Naive thymus-derived CD4-positive, alpha-beta T cell (primary cell): ENCODE measurements at regions of chr2 and their contacts with region 1.

Region 1: DNA sequence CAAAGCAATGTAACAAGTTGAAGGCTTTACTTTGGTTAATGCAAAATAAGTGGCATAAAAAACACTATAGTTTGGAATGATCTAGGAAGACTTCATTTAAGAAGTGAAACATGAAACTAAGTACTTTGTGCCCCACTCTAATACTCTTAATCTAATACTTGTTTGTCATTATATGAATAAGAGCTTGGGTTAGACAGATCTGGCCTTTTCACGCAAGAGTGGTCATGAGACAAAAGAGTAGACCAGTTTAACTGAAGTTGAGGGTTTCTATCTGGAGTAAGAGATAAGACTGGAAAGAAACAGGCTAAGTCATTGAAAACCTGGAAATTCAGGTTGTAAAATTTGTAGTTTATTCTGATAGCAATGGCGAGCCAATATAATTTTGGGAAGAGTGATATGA is 2.8 kb downstream of the SLC30A6 start:
- DNase-seq: no peak
- ATAC-seq: no peak
- H3K4me3 ChIP-seq: no peak overlapping the region
- H3K4me3 Mint-ChIP-seq: no peak overlapping the region
- H3K27ac ChIP-seq: no peak overlapping the region
- H3K27ac Mint-ChIP-seq: peak overlapping the region in 4 of 9 donors; percentile 2 to 25 (median 10)
- H3K4me1 ChIP-seq: no peaks in the 10 kb centered on the region
- H3K4me1 Mint-ChIP-seq: peaks cover 17 to 61% (median 49%) of the 10 kb centered on the region in 7 donors
- H3K27me3 ChIP-seq: no peaks in the 10 kb centered on the region
- H3K27me3 Mint-ChIP-seq: no peaks in the 10 kb centered on the region

Region 2: GRCh38 chr2:32039447-32040219 is 128.9 kb before region 1 on chr2 and contains the start of gene DPY30:
- CTCF ChIA-PET with region 1: interaction called, 7 read pairs
- POLR2A ChIA-PET with region 1: no interaction called
- intact Hi-C with region 1: loop called (anchors 1 kb)
- DNase-seq: peak; percentile 86 to 94 (median 90)
- ATAC-seq: peak; percentile 98
- H3K4me3 ChIP-seq: peak within 1 kb of the TSS; percentile 64
- H3K4me3 Mint-ChIP-seq: peak within 1 kb of the TSS; percentile 88 to 98 (median 93)
- H3K27ac ChIP-seq: peak within 1 kb of the TSS; percentile 78
- H3K27ac Mint-ChIP-seq: peak within 1 kb of the TSS; percentile 91 to 99 (median 96)
- H3K4me1 ChIP-seq: peaks cover 5 to 6% of the 10 kb centered on the region in 2 donors
- H3K4me1 Mint-ChIP-seq: peaks cover 0 to 32% (median 24%) of the 10 kb centered on the region in 7 donors
- H3K27me3 ChIP-seq: no peaks in the 10 kb centered on the region
- H3K27me3 Mint-ChIP-seq: no peaks in the 10 kb centered on the region
- total RNA-seq, gene DPY30: 21.4 to 61.9 (median 45.6) TPM

Region 3: GRCh38 chr2:32189011-32189410 is 20.5 kb after region 1 on chr2:
- CTCF ChIA-PET with region 1: no interaction called
- POLR2A ChIA-PET with region 1: no interaction called
- intact Hi-C with region 1: no loop called
- DNase-seq: no peak
- ATAC-seq: no peak
- H3K4me3 ChIP-seq: no peak overlapping the region
- H3K4me3 Mint-ChIP-seq: no peak overlapping the region
- H3K27ac ChIP-seq: no peak overlapping the region
- H3K27ac Mint-ChIP-seq: no peak overlapping the region
- H3K4me1 ChIP-seq: peaks cover 0 to 5% of the 10 kb centered on the region in 2 donors
- H3K4me1 Mint-ChIP-seq: peaks cover 0 to 22% (median 12%) of the 10 kb centered on the region in 7 donors
- H3K27me3 ChIP-seq: no peaks in the 10 kb centered on the region
- H3K27me3 Mint-ChIP-seq: no peaks in the 10 kb centered on the region

Region 4: DNA sequence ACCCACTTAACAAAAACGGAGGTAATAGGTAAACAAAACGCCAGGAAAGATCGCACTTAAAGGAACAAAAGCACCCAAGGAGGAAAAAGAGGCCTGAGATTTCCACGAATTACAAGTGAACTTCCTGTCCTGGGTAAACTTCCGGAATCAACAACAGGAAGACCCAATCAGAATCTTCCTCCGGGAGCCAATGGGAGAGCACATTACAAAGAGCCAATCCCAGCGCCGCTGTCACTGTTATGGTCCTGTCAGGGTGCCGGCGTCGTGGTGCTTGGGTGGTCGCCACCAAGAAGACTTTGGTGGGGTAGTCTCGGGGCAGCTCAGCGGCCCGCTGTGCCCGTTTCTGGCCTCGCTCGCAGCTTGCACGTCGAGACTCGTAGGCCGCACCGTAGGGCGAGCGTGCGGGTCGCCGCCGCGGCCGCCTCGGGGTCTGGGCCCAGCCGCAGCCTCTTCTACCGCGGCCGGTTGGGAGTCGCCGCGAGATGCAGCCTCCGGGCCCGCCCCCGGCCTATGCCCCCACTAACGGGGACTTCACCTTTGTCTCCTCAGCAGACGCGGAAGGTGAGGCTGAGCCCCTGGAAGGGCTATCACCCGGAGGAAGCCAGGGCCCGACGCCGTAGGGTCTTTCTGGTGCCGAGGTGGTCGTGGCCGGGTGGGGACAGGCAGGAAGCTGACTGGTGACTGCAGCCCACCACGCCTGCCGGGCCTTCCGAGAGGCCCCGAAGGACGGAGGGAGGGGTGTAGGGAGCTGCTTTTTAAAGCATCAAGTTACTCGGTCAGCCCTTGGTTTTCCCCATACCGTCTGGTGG is 109.4 kb after region 1 on chr2 and contains the start of gene YIPF4:
- CTCF ChIA-PET with region 1: no interaction called
- POLR2A ChIA-PET with region 1: interaction called, 6 read pairs
- intact Hi-C with region 1: loop called (anchors 1 kb)
- DNase-seq: peak; percentile 84 to 92 (median 88)
- ATAC-seq: peak; percentile 99
- H3K4me3 ChIP-seq: peak within 1 kb of the TSS; percentile 67
- H3K4me3 Mint-ChIP-seq: peak within 1 kb of the TSS; percentile 82 to 100 (median 94)
- H3K27ac ChIP-seq: peak within 1 kb of the TSS; percentile 84
- H3K27ac Mint-ChIP-seq: peak within 1 kb of the TSS; percentile 91 to 100 (median 98)
- H3K4me1 ChIP-seq: peaks cover under 1 to 6% of the 10 kb centered on the region in 2 donors
- H3K4me1 Mint-ChIP-seq: peaks cover 10 to 46% (median 33%) of the 10 kb centered on the region in 7 donors
- H3K27me3 ChIP-seq: no peaks in the 10 kb centered on the region
- H3K27me3 Mint-ChIP-seq: peaks cover 0 to 6% (median 0%) of the 10 kb centered on the region in 5 donors
- total RNA-seq, gene YIPF4: 21.0 to 43.5 (median 30.5) TPM